Activated CD4-positive, alpha-beta T cell treated with anti-CD3 and anti-CD28 coated beads, Interleukin-2, amount 10 ng/mL, durations not matched to agents 24 days and 14 days (primary cell): ENCODE measurements at regions of chr10 and their contacts with region 1.

Region 1: GRCh38 chr10:92573798-92574547 is at the start of gene IDE:
- DNase-seq: peak; percentile 96
- H3K4me3 Mint-ChIP-seq: peak within 1 kb of the TSS; percentile 79
- H3K27ac Mint-ChIP-seq: peak within 1 kb of the TSS; percentile 92
- H3K4me1 Mint-ChIP-seq: peaks cover 29% of the 10 kb centered on the region
- H3K27me3 Mint-ChIP-seq: no peaks in the 10 kb centered on the region
- total RNA-seq, gene IDE: 47.9 and 50.2 TPM in 2 replicates

Region 2: GRCh38 chr10:92517034-92517655 is 56.8 kb before region 1 on chr10:
- intact Hi-C with region 1: loop called (anchors 1 kb)
- DNase-seq: peak; percentile 89
- H3K4me3 Mint-ChIP-seq: no peak overlapping the region
- H3K27ac Mint-ChIP-seq: no peak overlapping the region
- H3K4me1 Mint-ChIP-seq: peaks cover 4% of the 10 kb centered on the region
- H3K27me3 Mint-ChIP-seq: no peaks in the 10 kb centered on the region